Naive thymus-derived CD4-positive, alpha-beta T cell (primary cell): ENCODE measurements at regions of chrX and their contacts with region 1.

Region 1: GRCh38 chrX:46573331-46573891 is at the start of gene CHST7:
- DNase-seq: peak in 8 of 9 donors; percentile 15 to 60 (median 25)
- ATAC-seq: peak; percentile 69
- H3K4me3 ChIP-seq: peak within 1 kb of the TSS; percentile 61
- H3K4me3 Mint-ChIP-seq: peak within 1 kb of the TSS; percentile 51 to 84 (median 74)
- H3K27ac ChIP-seq: peak within 1 kb of the TSS; percentile 57
- H3K27ac Mint-ChIP-seq: peak within 1 kb of the TSS in 7 of 9 donors; percentile 17 to 81 (median 72)
- H3K4me1 ChIP-seq: peaks cover 3 to 17% of the 10 kb centered on the region in 2 donors
- H3K4me1 Mint-ChIP-seq: peaks cover 16 to 41% (median 35%) of the 10 kb centered on the region in 7 donors
- H3K27me3 ChIP-seq: no peaks in the 10 kb centered on the region
- H3K27me3 Mint-ChIP-seq: no peaks in the 10 kb centered on the region
- total RNA-seq, gene CHST7: 2.1 to 7.2 (median 2.3) TPM

Region 2: GRCh38 chrX:46446727-46447378 is 126.6 kb before region 1 on chrX:
- CTCF ChIA-PET with region 1: no interaction called
- POLR2A ChIA-PET with region 1: no interaction called
- intact Hi-C with region 1: loop called in 1 of 2 experiments (anchors 2 kb)
- DNase-seq: peak; percentile 75 to 86 (median 81)
- ATAC-seq: peak; percentile 94
- H3K4me3 ChIP-seq: peak overlapping the region; percentile 83
- H3K4me3 Mint-ChIP-seq: peak overlapping the region; percentile 77 to 91 (median 85)
- H3K27ac ChIP-seq: peak overlapping the region; percentile 86
- H3K27ac Mint-ChIP-seq: peak overlapping the region; percentile 79 to 92 (median 90)
- H3K4me1 ChIP-seq: peaks cover 5 to 7% of the 10 kb centered on the region in 2 donors
- H3K4me1 Mint-ChIP-seq: peaks cover 0 to 29% (median 20%) of the 10 kb centered on the region in 7 donors
- H3K27me3 ChIP-seq: no peaks in the 10 kb centered on the region
- H3K27me3 Mint-ChIP-seq: no peaks in the 10 kb centered on the region

Region 3: DNA sequence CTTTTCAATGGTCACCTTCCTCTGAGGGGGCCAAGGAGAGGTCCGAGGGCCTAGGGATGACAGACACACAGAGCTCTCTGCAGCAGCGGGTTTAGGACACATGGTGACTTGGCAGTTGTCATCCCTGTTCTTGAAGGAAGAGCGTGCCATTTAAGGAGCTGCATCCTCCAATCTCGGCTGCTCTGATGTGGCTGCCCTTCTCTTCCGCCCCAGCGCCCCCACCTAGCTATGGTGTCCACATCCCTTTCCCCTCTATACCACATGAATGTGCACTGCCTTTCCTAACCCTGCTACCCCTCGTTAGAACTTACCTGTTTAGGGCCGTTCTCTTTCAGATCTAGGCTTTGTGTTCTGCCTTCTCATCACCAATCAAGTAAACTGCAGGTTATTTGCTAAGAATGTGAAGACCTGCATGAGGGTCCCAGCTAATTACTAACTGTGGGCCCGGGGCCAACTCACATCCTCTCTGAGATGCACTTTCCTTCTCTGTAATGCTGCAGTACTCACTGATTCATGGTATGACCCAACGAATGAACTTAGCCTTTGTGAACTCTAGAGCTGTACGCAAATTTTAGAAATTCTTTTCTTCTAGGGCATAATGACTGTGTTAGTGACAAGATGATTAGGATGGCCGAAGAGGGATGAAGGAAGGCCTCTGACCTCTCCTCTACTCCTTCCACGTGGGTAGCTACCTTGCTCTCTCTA is 38.4 kb after region 1 on chrX:
- CTCF ChIA-PET with region 1: interaction called, 3 read pairs
- POLR2A ChIA-PET with region 1: interaction called, 4 read pairs
- intact Hi-C with region 1: loop called (anchors 1 to 2 kb)
- DNase-seq: peak in 6 of 9 donors; percentile 49 to 71 (median 62)
- ATAC-seq: peak; percentile 84
- H3K4me3 ChIP-seq: peak overlapping the region; percentile 35
- H3K4me3 Mint-ChIP-seq: peak overlapping the region; percentile 22 to 80 (median 71)
- H3K27ac ChIP-seq: no peak overlapping the region
- H3K27ac Mint-ChIP-seq: peak overlapping the region in 4 of 9 donors; percentile 5 to 85 (median 41)
- H3K4me1 ChIP-seq: peaks cover 21 to 29% of the 10 kb centered on the region in 2 donors
- H3K4me1 Mint-ChIP-seq: peaks cover 8 to 63% (median 31%) of the 10 kb centered on the region in 7 donors
- H3K27me3 ChIP-seq: no peaks in the 10 kb centered on the region
- H3K27me3 Mint-ChIP-seq: peaks cover 0 to 17% (median under 1%) of the 10 kb centered on the region in 5 donors

Region 4: GRCh38 chrX:46642145-46642544 is 68.7 kb after region 1 on chrX:
- CTCF ChIA-PET with region 1: interaction called, 7 read pairs
- POLR2A ChIA-PET with region 1: no interaction called
- intact Hi-C with region 1: loop called (anchors 1 kb)
- DNase-seq: peak in 6 of 9 donors; percentile 3 to 54 (median 38)
- ATAC-seq: peak; percentile 65
- H3K4me3 ChIP-seq: no peak overlapping the region
- H3K4me3 Mint-ChIP-seq: no peak overlapping the region
- H3K27ac ChIP-seq: no peak overlapping the region
- H3K27ac Mint-ChIP-seq: no peak overlapping the region
- H3K4me1 ChIP-seq: no peaks in the 10 kb centered on the region
- H3K4me1 Mint-ChIP-seq: peaks cover 0 to 17% (median 0%) of the 10 kb centered on the region in 7 donors
- H3K27me3 ChIP-seq: no peaks in the 10 kb centered on the region
- H3K27me3 Mint-ChIP-seq: no peaks in the 10 kb centered on the region

Region 5: DNA sequence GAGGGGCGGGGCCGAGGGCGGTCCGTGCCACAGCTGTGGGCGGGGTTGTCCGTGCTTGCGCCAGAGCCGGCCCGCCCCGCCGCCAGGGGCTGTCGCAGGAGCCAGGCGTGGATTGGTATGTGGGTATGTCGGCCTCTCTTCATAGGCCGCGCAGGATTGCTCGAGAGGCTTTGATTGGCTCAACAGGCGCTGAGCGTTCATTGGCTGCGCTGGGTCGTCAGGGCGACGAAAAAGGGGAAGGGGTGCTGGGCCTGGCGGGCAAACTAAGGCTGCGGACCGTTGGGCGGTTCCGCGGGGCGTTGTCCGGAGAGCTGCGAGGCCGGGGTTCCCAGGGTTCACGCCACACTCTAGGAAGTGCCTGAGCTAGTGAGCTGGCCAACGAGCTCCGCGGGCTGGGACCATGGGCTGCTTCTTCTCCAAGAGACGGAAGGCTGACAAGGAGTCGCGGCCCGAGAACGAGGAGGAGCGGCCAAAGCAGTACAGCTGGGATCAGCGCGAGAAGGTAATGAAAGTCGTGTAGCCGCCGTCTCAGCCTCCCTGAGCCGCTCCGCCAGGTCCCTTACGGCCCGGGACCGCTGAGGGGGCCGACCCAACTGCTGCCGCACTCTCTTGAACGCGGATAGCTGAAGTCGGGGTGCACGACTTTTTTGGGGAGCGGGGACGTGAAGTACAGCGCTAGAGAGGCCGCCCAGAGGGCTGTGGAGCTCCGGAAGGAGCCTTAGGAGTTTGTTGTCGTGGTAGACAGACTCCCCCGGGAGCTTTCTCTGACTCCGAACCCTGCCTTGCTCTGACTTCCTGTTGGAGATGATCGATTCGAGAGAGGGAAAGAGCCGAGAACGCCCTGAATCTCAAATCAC is 263.5 kb after region 1 on chrX and contains the start of gene RP2:
- CTCF ChIA-PET with region 1: no interaction called
- POLR2A ChIA-PET with region 1: no interaction called
- intact Hi-C with region 1: loop called in 1 of 2 experiments (anchors 2 kb)
- DNase-seq: peak; percentile 65 to 84 (median 81)
- ATAC-seq: peak; percentile 98
- H3K4me3 ChIP-seq: peak within 1 kb of the TSS; percentile 91
- H3K4me3 Mint-ChIP-seq: peak within 1 kb of the TSS; percentile 93 to 99 (median 97)
- H3K27ac ChIP-seq: peak within 1 kb of the TSS; percentile 83
- H3K27ac Mint-ChIP-seq: peak within 1 kb of the TSS; percentile 80 to 98 (median 93)
- H3K4me1 ChIP-seq: no peaks in the 10 kb centered on the region
- H3K4me1 Mint-ChIP-seq: peaks cover 0 to 29% (median 12%) of the 10 kb centered on the region in 7 donors
- H3K27me3 ChIP-seq: no peaks in the 10 kb centered on the region
- H3K27me3 Mint-ChIP-seq: peaks cover 0 to 3% (median 0%) of the 10 kb centered on the region in 5 donors
- total RNA-seq, gene RP2: 4.9 to 14.5 (median 6.3) TPM

Region 6: GRCh38 chrX:47751670-47752069 is 1178.3 kb after region 1 on chrX:
- CTCF ChIA-PET with region 1: no interaction called
- POLR2A ChIA-PET with region 1: no interaction called
- intact Hi-C with region 1: no loop called
- DNase-seq: peak in 5 of 9 donors; percentile 0 to 28 (median 13)
- ATAC-seq: peak; percentile 42
- H3K4me3 ChIP-seq: no peak overlapping the region
- H3K4me3 Mint-ChIP-seq: no peak overlapping the region
- H3K27ac ChIP-seq: no peak overlapping the region
- H3K27ac Mint-ChIP-seq: peak overlapping the region in 1 of 9 donors; percentile 15
- H3K4me1 ChIP-seq: no peaks in the 10 kb centered on the region
- H3K4me1 Mint-ChIP-seq: peaks cover 0 to 3% (median 0%) of the 10 kb centered on the region in 7 donors
- H3K27me3 ChIP-seq: no peaks in the 10 kb centered on the region
- H3K27me3 Mint-ChIP-seq: peaks cover 0 to 4% (median 0%) of the 10 kb centered on the region in 5 donors